Heart right ventricle (tissue), 16 donors: ENCODE measurements at regions of chr15 and their contacts with region 1.

Region 1: GRCh38 chr15:91529534-91529933 is 324.0 kb upstream of the SLCO3A1 start:
- DNase-seq: no peak
- ATAC-seq: no peak
- H3K4me3 ChIP-seq: no peak overlapping the region
- H3K27ac ChIP-seq: no peak overlapping the region
- H3K4me1 ChIP-seq: peaks cover 0 to 24% (median 0%) of the 10 kb centered on the region in 9 donors
- H3K27me3 ChIP-seq: no peaks in the 10 kb centered on the region
- CTCF ChIP-seq: no peak

Region 2: GRCh38 chr15:91357011-91357410 is 172.5 kb before region 1 on chr15:
- intact Hi-C with region 1: no loop called
- DNase-seq: no peak
- ATAC-seq: no peak
- H3K4me3 ChIP-seq: no peak overlapping the region
- H3K27ac ChIP-seq: no peak overlapping the region
- H3K4me1 ChIP-seq: no peaks in the 10 kb centered on the region
- H3K27me3 ChIP-seq: peaks cover 0 to 7% (median 0%) of the 10 kb centered on the region in 7 donors
- CTCF ChIP-seq: no peak

Region 3: GRCh38 chr15:91496647-91497354 is 32.7 kb before region 1 on chr15:
- intact Hi-C with region 1: loop called in 1 of 10 experiments (anchors 1 kb)
- DNase-seq: no peak
- ATAC-seq: peak in 1 of 8 donors; percentile 33
- H3K4me3 ChIP-seq: no peak overlapping the region
- H3K27ac ChIP-seq: no peak overlapping the region
- H3K4me1 ChIP-seq: no peaks in the 10 kb centered on the region
- H3K27me3 ChIP-seq: peaks cover 0 to 10% (median 0%) of the 10 kb centered on the region in 7 donors
- CTCF ChIP-seq: no peak

Region 4: GRCh38 chr15:91627473-91628278 is 98.1 kb after region 1 on chr15:
- intact Hi-C with region 1: loop called in 1 of 10 experiments (anchors 5 kb)
- DNase-seq: peak; percentile 61 to 63
- ATAC-seq: peak; percentile 83 to 95 (median 92)
- H3K4me3 ChIP-seq: no peak overlapping the region
- H3K27ac ChIP-seq: peak overlapping the region; percentile 7 to 85 (median 66)
- H3K4me1 ChIP-seq: peaks cover 4 to 21% (median 9%) of the 10 kb centered on the region in 9 donors
- H3K27me3 ChIP-seq: no peaks in the 10 kb centered on the region
- CTCF ChIP-seq: no peak

Region 5: GRCh38 chr15:91867581-91868026 is 338.1 kb after region 1 on chr15:
- intact Hi-C with region 1: no loop called
- DNase-seq: peak; percentile 72 to 86
- ATAC-seq: peak; percentile 75 to 92 (median 86)
- H3K4me3 ChIP-seq: peak overlapping the region in 5 of 10 donors; percentile 3 to 19 (median 10)
- H3K27ac ChIP-seq: peak overlapping the region; percentile 67 to 90 (median 80)
- H3K4me1 ChIP-seq: peaks cover 25 to 94% (median 82%) of the 10 kb centered on the region in 9 donors
- H3K27me3 ChIP-seq: no peaks in the 10 kb centered on the region
- CTCF ChIP-seq: no peak

Region 6: DNA sequence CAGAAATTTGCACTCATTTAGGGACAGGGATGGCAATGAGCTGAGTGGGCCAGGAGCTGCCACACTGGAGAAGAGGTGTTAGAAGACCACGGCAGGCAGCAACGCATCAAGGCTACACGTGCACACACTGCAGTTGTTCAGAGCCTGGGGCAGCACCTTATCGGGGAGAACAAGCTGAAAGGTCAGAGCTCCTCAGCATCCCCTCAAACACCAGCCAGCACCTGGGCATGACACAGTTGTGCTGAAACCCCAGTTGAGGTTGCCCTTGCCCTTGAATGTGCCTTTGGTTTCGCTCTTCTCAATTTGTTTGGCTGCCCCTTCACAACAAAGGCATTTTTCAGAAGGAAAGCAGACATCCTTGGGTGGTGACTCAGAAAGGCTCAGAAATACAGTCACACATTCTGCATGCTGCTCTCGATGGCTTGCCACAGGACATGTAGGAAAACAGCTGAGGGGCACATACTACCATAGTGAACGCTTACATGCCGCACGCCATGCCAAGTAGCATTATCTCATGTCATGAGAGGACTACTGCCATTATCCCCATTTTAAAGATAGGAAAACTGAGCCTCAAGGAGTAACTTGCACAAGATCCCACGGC is 921.8 kb after region 1 on chr15:
- intact Hi-C with region 1: no loop called
- DNase-seq: no peak
- ATAC-seq: no peak
- H3K4me3 ChIP-seq: no peak overlapping the region
- H3K27ac ChIP-seq: no peak overlapping the region
- H3K4me1 ChIP-seq: no peaks in the 10 kb centered on the region
- H3K27me3 ChIP-seq: peaks cover 0 to 11% (median 0%) of the 10 kb centered on the region in 7 donors
- CTCF ChIP-seq: no peak